CD4-positive, alpha-beta T cell (primary cell): ENCODE measurements at regions of chr19 and their contacts with region 1.

Region 1: DNA sequence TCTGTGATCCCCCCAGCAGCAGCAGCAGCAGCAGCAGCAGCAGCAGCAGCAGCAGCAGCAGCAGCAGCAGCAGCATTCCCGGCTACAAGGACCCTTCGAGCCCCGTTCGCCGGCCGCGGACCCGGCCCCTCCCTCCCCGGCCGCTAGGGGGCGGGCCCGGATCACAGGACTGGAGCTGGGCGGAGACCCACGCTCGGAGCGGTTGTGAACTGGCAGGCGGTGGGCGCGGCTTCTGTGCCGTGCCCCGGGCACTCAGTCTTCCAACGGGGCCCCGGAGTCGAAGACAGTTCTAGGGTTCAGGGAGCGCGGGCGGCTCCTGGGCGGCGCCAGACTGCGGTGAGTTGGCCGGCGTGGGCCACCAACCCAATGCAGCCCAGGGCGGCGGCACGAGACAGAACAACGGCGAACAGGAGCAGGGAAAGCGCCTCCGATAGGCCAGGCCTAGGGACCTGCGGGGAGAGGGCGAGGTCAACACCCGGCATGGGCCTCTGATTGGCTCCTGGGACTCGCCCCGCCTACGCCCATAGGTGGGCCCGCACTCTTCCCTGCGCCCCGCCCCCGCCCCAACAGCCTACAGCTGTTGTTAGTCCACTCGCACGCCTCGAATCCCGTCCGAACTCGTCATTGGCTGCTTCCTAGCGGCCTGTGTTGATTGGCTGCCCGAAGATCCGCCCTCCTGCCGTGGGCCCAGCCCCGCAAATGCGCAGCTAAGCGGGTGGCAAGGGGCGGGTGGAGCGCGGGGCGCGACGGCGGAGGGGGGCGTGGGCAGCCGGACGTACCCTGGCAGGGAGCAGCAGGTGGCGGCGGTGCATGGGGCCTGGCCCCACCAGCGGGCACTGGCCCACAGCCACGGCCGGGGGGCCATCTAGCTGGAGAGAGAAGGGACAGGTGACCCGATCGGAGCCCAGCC is 1.4 kb upstream of the SIX5 start:
- DNase-seq: peak; percentile 82 to 95 (median 90)
- ATAC-seq: peak; percentile 75
- H3K4me3 ChIP-seq: peak overlapping the region; percentile 79
- H3K4me3 Mint-ChIP-seq: peak overlapping the region; percentile 89
- H3K27ac ChIP-seq: peak overlapping the region in 1 of 2 donors; percentile 52
- H3K27ac Mint-ChIP-seq: peak overlapping the region; percentile 87
- H3K4me1 ChIP-seq: peaks cover 35% of the 10 kb centered on the region
- H3K4me1 Mint-ChIP-seq: peaks cover 25% of the 10 kb centered on the region
- H3K27me3 ChIP-seq: peaks cover 12 to 22% of the 10 kb centered on the region in 2 experiments
- H3K27me3 Mint-ChIP-seq: peaks cover 5% of the 10 kb centered on the region
- CTCF ChIP-seq: peak; percentile 97

Region 2: GRCh38 chr19:45485305-45486077 is 285.0 kb before region 1 on chr19:
- CTCF ChIA-PET with region 1: no interaction called
- POLR2A ChIA-PET with region 1: no interaction called
- intact Hi-C with region 1: no loop called
- DNase-seq: peak; percentile 95 to 98 (median 97)
- ATAC-seq: peak; percentile 99
- H3K4me3 ChIP-seq: peak overlapping the region; percentile 69
- H3K4me3 Mint-ChIP-seq: peak overlapping the region; percentile 98
- H3K27ac ChIP-seq: no peak overlapping the region
- H3K27ac Mint-ChIP-seq: peak overlapping the region; percentile 47
- H3K4me1 ChIP-seq: peaks cover 14% of the 10 kb centered on the region
- H3K4me1 Mint-ChIP-seq: peaks cover 6% of the 10 kb centered on the region
- H3K27me3 ChIP-seq: no peaks in the 10 kb centered on the region
- H3K27me3 Mint-ChIP-seq: peaks cover 7% of the 10 kb centered on the region
- CTCF ChIP-seq: peak; percentile 86

Region 3: GRCh38 chr19:45692187-45693105 is 78.0 kb before region 1 on chr19 and contains the start of gene QPCTL:
- CTCF ChIA-PET with region 1: interaction called, 8 read pairs
- POLR2A ChIA-PET with region 1: interaction called, 16 read pairs
- intact Hi-C with region 1: no loop called
- DNase-seq: peak; percentile 92 to 99 (median 94)
- ATAC-seq: peak; percentile 87
- H3K4me3 ChIP-seq: peak within 1 kb of the TSS; percentile 85
- H3K4me3 Mint-ChIP-seq: peak within 1 kb of the TSS; percentile 96
- H3K27ac ChIP-seq: peak within 1 kb of the TSS; percentile 86 to 93
- H3K27ac Mint-ChIP-seq: peak within 1 kb of the TSS; percentile 95
- H3K4me1 ChIP-seq: peaks cover 39% of the 10 kb centered on the region
- H3K4me1 Mint-ChIP-seq: peaks cover 33% of the 10 kb centered on the region
- H3K27me3 ChIP-seq: no peaks in the 10 kb centered on the region
- H3K27me3 Mint-ChIP-seq: no peaks in the 10 kb centered on the region
- CTCF ChIP-seq: no peak
- total RNA-seq, gene QPCTL: 3.7 to 5.0 TPM

Region 4: DNA sequence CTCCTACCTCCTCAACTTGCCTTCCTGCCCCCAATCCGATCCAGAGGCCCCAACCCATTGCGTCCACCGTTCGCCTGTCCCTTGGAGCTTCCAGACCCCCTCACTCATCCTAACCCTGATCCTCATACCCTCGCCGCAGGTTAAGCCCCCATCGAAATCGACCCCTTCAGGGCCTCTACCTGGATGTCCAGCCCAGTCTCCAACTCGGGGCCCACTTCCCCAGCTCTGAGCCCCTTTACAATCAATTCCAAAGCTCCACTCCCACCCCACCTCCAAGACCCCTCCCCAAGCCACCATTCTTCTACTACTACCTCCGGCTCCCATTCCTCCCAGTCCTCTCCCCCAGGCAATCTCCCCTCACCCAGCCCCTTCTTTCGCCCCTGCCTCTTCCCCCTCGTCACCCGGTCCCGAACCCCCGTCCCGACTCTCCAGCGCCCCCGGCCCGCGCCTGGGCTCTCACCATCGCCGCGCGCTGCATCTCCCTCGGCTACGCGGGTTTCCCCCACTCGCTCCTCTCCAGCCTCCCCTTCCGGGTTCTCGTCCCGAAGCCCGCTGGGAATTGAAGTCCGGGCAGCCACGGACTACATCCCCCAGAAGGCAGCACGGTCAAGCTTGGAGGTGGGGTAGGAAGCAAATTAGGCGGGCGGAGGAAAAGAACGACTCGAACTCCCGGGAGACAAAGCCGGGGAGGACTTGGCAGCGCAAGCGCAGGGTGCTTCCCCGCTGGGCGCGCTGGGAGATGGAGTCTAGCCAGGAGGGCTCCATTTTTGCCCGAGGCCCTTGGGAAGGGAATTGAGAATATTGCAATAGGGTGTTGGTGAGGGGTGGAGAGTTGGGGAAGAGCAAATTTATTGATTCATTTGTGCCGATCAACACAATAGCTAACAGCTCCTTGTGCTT is 39.8 kb before region 1 on chr19 and contains the start of gene FBXO46:
- CTCF ChIA-PET with region 1: interaction called, 10 read pairs
- POLR2A ChIA-PET with region 1: interaction called, 7 read pairs
- intact Hi-C with region 1: loop called (anchors 2 kb)
- DNase-seq: peak; percentile 83 to 97 (median 91)
- ATAC-seq: peak; percentile 99
- H3K4me3 ChIP-seq: peak within 1 kb of the TSS; percentile 77
- H3K4me3 Mint-ChIP-seq: peak within 1 kb of the TSS; percentile 97
- H3K27ac ChIP-seq: peak within 1 kb of the TSS; percentile 31 to 49
- H3K27ac Mint-ChIP-seq: peak within 1 kb of the TSS; percentile 83
- H3K4me1 ChIP-seq: peaks cover 37% of the 10 kb centered on the region
- H3K4me1 Mint-ChIP-seq: peaks cover 33% of the 10 kb centered on the region
- H3K27me3 ChIP-seq: no peaks in the 10 kb centered on the region
- H3K27me3 Mint-ChIP-seq: no peaks in the 10 kb centered on the region
- CTCF ChIP-seq: no peak
- total RNA-seq, gene FBXO46: 17.2 to 17.5 TPM

Region 5: DNA sequence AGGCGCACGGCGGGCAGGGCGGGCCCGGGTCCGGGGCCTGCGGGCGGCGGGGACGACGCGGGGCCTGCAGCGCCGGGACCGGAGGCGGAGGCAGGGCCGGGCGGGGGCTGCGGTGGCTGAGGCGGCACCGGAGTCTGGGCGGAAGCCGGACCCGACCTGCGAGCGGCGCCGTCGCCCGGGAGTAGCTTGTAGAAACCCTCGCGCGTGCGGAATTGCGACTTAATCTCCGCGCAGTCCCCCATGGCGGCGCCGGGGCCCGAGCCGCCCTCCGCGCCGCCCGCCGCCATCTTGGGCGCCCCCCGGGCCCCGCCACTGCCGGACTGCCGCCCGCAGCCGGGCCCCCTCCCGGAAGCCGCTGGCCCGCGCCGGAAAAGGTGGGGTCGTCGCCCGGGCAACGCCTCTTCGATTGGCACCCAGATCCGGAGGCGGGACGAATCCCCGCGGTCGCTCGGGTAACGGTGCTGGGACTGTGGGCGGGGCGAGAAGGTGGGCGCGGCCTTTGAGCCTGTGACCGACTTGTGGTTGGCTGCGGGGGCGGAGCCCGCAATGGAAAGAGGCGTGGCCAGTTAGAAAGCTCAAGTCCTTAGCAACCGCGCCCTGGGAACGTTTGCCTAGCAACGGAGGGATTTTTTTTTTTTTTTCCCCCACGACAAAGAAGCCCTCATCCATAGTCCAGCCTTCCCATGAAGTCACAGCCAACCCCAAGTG is 22.2 kb after region 1 on chr19 and contains the start of gene DMWD:
- CTCF ChIA-PET with region 1: interaction called, 172 read pairs
- POLR2A ChIA-PET with region 1: interaction called, 50 read pairs
- intact Hi-C with region 1: no loop called
- DNase-seq: peak; percentile 98 to 100 (median 99)
- ATAC-seq: peak; percentile 92
- H3K4me3 ChIP-seq: peak within 1 kb of the TSS; percentile 55
- H3K4me3 Mint-ChIP-seq: peak within 1 kb of the TSS; percentile 92
- H3K27ac ChIP-seq: no peak within 1 kb of the TSS
- H3K27ac Mint-ChIP-seq: peak within 1 kb of the TSS; percentile 81
- H3K4me1 ChIP-seq: peaks cover 30% of the 10 kb centered on the region
- H3K4me1 Mint-ChIP-seq: peaks cover 52% of the 10 kb centered on the region
- H3K27me3 ChIP-seq: peaks cover 16 to 23% of the 10 kb centered on the region in 2 experiments
- H3K27me3 Mint-ChIP-seq: peaks cover 32% of the 10 kb centered on the region
- CTCF ChIP-seq: no peak
- total RNA-seq, gene DMWD: 28.6 to 31.5 TPM

Region 6: DNA sequence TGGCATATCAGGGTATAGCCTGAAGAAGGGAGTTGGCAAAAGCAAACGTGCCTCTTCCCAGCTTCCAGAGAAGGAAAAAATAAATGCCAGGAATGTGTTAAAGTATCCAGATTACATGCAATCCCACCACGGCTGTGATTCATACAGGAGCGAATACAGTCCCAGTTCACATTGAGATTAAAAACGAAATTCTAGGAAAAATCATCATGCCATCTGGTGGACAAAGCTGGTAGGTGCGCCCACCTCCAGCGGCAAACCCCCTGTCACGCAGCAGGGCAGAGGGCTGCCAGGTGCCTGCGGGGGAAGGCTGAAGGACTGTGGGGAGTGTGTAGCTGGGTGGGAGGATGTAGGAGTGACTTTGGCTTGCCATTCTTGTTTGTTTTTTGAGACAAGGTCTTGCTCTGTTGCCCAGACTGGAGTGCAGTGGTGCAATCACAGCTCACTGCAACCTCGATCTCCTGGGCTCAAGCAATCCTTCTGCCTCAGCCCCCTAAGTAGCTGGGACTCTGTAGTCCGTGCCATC is 28.6 kb after region 1 on chr19:
- CTCF ChIA-PET with region 1: interaction called, 172 read pairs
- POLR2A ChIA-PET with region 1: interaction called, 52 read pairs
- intact Hi-C with region 1: loop called (anchors 1 kb)
- DNase-seq: peak in 13 of 14 experiments; percentile 33 to 82 (median 52)
- ATAC-seq: peak; percentile 96
- H3K4me3 ChIP-seq: no peak overlapping the region
- H3K4me3 Mint-ChIP-seq: no peak overlapping the region
- H3K27ac ChIP-seq: no peak overlapping the region
- H3K27ac Mint-ChIP-seq: no peak overlapping the region
- H3K4me1 ChIP-seq: peaks cover 7% of the 10 kb centered on the region
- H3K4me1 Mint-ChIP-seq: peaks cover 11% of the 10 kb centered on the region
- H3K27me3 ChIP-seq: peaks cover 28 to 33% of the 10 kb centered on the region in 2 experiments
- H3K27me3 Mint-ChIP-seq: peaks cover 39% of the 10 kb centered on the region
- CTCF ChIP-seq: peak; percentile 91

Region 7: GRCh38 chr19:45817010-45817724 is 46.7 kb after region 1 on chr19:
- CTCF ChIA-PET with region 1: interaction called, 27 read pairs
- POLR2A ChIA-PET with region 1: interaction called, 4 read pairs
- intact Hi-C with region 1: no loop called
- DNase-seq: peak; percentile 92 to 98 (median 96)
- ATAC-seq: peak; percentile 100
- H3K4me3 ChIP-seq: no peak overlapping the region
- H3K4me3 Mint-ChIP-seq: no peak overlapping the region
- H3K27ac ChIP-seq: no peak overlapping the region
- H3K27ac Mint-ChIP-seq: no peak overlapping the region
- H3K4me1 ChIP-seq: peaks cover 25% of the 10 kb centered on the region
- H3K4me1 Mint-ChIP-seq: peaks cover 6% of the 10 kb centered on the region
- H3K27me3 ChIP-seq: peaks cover 7 to 13% of the 10 kb centered on the region in 2 experiments
- H3K27me3 Mint-ChIP-seq: peaks cover 25% of the 10 kb centered on the region
- CTCF ChIP-seq: peak; percentile 100

Region 8: DNA sequence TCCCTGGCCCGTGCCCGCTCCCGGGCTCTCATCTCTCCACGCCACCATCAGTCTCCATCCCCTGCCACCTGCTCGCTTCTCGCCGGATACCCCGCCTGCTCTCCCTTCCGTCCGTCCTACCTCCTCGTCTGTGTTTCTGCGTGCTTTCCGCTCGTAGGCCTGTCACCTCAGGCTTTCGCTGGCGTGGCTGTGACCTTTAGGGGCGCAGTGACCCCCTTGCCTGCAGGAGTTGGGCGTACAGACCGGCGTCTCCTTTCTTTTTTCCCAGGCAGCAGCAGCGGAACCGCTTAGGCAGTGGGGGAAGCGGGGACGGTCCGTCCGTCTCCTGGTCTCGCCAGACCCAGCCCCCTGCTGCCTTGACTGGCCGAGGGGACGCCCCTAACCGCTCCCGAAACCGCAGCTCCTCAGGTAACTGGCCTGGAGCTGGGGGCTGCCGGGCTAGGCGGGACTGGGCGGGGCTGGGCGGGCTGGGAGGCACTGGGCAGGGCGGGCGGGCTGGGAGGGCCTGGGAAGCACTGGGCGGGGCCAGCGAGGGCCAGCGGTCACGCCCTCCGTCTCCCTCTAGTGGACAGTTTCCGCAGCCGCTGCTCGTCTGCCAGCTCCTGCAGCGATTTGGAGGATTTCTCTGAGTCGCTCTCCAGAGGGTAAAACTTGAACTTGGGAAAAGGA is 246.1 kb after region 1 on chr19:
- CTCF ChIA-PET with region 1: no interaction called
- POLR2A ChIA-PET with region 1: no interaction called
- intact Hi-C with region 1: loop called (anchors 5 to 10 kb)
- DNase-seq: peak; percentile 67 to 93 (median 76)
- ATAC-seq: peak; percentile 74
- H3K4me3 ChIP-seq: peak overlapping the region; percentile 85
- H3K4me3 Mint-ChIP-seq: peak overlapping the region; percentile 95
- H3K27ac ChIP-seq: no peak overlapping the region
- H3K27ac Mint-ChIP-seq: peak overlapping the region; percentile 56
- H3K4me1 ChIP-seq: peaks cover 23% of the 10 kb centered on the region
- H3K4me1 Mint-ChIP-seq: peaks cover 21% of the 10 kb centered on the region
- H3K27me3 ChIP-seq: peaks cover 7 to 8% of the 10 kb centered on the region in 2 experiments
- H3K27me3 Mint-ChIP-seq: peaks cover 7% of the 10 kb centered on the region
- CTCF ChIP-seq: peak; percentile 94